MCF 10A (cell line): ENCODE measurements at regions of chr6 and their contacts with region 1.

Region 1: DNA sequence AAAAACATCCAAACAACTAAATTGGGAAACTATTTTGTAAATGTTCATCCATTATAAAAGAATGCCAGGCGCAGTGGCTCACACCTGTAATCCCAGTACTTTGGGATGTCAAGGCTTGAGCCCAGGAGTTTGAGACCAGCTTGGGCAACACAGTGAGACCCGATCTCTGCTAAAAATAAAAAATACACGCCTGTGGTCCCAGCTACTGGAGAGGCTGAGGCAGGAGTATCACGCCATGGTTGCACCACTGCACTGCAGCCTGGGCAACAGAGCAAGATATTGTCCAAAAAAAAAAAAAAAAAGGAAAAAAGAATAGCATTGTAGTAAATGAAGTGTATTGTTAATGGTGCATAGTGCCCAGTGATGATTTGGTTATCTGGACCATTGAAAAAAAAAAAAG is 38.7 kb downstream of the FKBP5 start:
- DNase-seq: no peak
- H3K4me3 Mint-ChIP-seq: no peak overlapping the region
- H3K27ac Mint-ChIP-seq: no peak overlapping the region
- H3K4me1 Mint-ChIP-seq: peaks cover 27% of the 10 kb centered on the region
- H3K27me3 Mint-ChIP-seq: no peaks in the 10 kb centered on the region
- CTCF ChIP-seq: no peak

Region 2: DNA sequence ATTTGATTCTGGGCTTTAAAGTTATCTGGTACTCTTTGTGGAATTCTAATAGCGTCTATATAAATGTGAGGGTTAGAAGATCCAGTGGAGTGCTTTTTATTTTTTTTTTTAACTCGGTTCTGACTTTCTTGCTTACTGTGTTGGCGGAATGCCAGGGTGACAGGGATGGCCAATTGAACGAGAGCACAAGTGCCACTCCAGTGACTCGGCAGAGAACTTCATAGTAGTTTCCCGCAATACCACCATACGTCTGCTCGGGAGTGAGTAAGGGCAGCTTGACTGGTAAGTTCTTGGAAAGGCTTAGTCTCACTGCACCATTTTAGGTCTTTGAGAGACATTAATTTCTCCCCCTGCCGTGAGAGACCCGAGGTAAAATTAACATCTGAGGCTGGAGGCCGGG is 88.0 kb before region 1 on chr6:
- CTCF ChIA-PET with region 1: no interaction called
- POLR2A ChIA-PET with region 1: no interaction called
- intact Hi-C with region 1: no loop called
- DNase-seq: no peak
- H3K4me3 Mint-ChIP-seq: no peak overlapping the region
- H3K27ac Mint-ChIP-seq: no peak overlapping the region
- H3K4me1 Mint-ChIP-seq: no peaks in the 10 kb centered on the region
- H3K27me3 Mint-ChIP-seq: no peaks in the 10 kb centered on the region
- CTCF ChIP-seq: no peak

Region 3: GRCh38 chr6:35669451-35670045 is 19.5 kb after region 1 on chr6:
- CTCF ChIA-PET with region 1: no interaction called
- POLR2A ChIA-PET with region 1: interaction called, 28 read pairs
- intact Hi-C with region 1: no loop called
- DNase-seq: no peak
- H3K4me3 Mint-ChIP-seq: peak overlapping the region; percentile 28
- H3K27ac Mint-ChIP-seq: peak overlapping the region; percentile 54
- H3K4me1 Mint-ChIP-seq: peaks cover 26% of the 10 kb centered on the region
- H3K27me3 Mint-ChIP-seq: no peaks in the 10 kb centered on the region
- CTCF ChIP-seq: no peak

Region 4: GRCh38 chr6:35719404-35719829 is 69.4 kb after region 1 on chr6:
- CTCF ChIA-PET with region 1: no interaction called
- POLR2A ChIA-PET with region 1: no interaction called
- intact Hi-C with region 1: no loop called
- DNase-seq: no peak
- H3K4me3 Mint-ChIP-seq: no peak overlapping the region
- H3K27ac Mint-ChIP-seq: no peak overlapping the region
- H3K4me1 Mint-ChIP-seq: peaks cover 32% of the 10 kb centered on the region
- H3K27me3 Mint-ChIP-seq: no peaks in the 10 kb centered on the region
- CTCF ChIP-seq: no peak